Mammary epithelial cell (primary cell): ENCODE measurements at regions of chr6 and their contacts with region 1.

Region 1: GRCh38 chr6:116648156-116648555 is 20.4 kb downstream of the ZUP1 start:
- DNase-seq: no peak
- H3K4me3 ChIP-seq: no peak overlapping the region
- H3K27ac ChIP-seq: no peak overlapping the region
- H3K4me1 ChIP-seq: no peaks in the 10 kb centered on the region
- H3K27me3 ChIP-seq: no peaks in the 10 kb centered on the region
- CTCF ChIP-seq: no peak

Region 2: GRCh38 chr6:116531675-116532570 is 116.2 kb before region 1 on chr6:
- CTCF ChIA-PET with region 1: no interaction called
- dilution Hi-C with region 1: no loop called
- in situ Hi-C with region 1: no loop called
- intact Hi-C with region 1: no loop called
- DNase-seq: peak; percentile 42
- H3K4me3 ChIP-seq: no peak overlapping the region
- H3K27ac ChIP-seq: no peak overlapping the region
- H3K4me1 ChIP-seq: peaks cover 27% of the 10 kb centered on the region
- H3K27me3 ChIP-seq: no peaks in the 10 kb centered on the region
- CTCF ChIP-seq: peak; percentile 68 to 72

Region 3: DNA sequence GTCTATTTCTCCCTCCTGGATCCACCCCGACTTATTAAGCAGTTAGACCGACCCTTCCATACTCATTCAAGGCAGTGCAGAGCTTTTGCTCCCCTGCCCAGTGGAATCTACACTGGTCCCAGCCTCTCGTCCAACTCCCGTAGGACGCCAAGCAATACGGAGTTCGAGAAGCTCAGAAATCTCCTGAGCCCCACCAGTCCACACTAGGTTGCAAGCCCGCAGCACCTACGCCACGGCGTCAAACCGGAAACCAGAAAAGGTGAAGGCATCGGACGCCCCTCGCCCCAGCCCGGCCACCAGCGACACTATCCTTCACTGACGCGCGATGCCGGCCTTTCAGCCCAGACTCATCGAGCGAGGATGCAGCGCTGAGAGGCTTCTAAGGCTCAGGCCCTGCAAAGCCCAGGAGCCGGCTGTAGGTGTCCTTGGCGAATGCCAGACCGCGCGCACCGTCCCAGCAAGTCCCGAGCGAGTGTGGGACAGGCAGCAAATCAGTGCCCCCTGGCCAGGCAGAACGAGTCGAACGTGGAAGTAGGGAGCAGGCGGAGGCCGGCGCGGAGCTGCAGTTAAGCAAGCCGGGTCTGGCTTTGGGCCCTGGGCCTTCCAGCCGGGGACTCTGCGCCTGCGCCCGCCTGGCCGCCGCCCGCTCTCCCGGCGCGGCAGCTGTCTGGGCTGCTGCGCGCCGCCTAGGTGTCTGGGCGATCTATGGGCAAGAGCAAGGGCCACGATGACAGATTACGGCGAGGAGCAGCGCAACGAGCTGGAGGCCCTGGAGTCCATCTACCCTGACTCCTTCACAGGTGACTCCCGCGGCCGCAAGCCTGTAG is 77.1 kb before region 1 on chr6 and contains the start of gene RWDD1:
- CTCF ChIA-PET with region 1: no interaction called
- dilution Hi-C with region 1: no loop called
- in situ Hi-C with region 1: no loop called
- intact Hi-C with region 1: loop called (anchors 2 kb)
- DNase-seq: peak; percentile 99
- H3K4me3 ChIP-seq: peak within 1 kb of the TSS; percentile 92 to 99 (median 92)
- H3K27ac ChIP-seq: peak within 1 kb of the TSS; percentile 79
- H3K4me1 ChIP-seq: peaks cover 13% of the 10 kb centered on the region
- H3K27me3 ChIP-seq: no peaks in the 10 kb centered on the region
- CTCF ChIP-seq: peak in 1 of 2 donors; percentile 22
- total RNA-seq, gene RWDD1: 27.0 to 44.7 TPM

Region 4: GRCh38 chr6:116615937-116616736 is 32.0 kb before region 1 on chr6 and contains the start of gene RSPH4A:
- CTCF ChIA-PET with region 1: no interaction called
- dilution Hi-C with region 1: no loop called
- in situ Hi-C with region 1: no loop called
- intact Hi-C with region 1: no loop called
- DNase-seq: peak; percentile 94
- H3K4me3 ChIP-seq: peak within 1 kb of the TSS; percentile 46 to 61 (median 58)
- H3K27ac ChIP-seq: peak within 1 kb of the TSS; percentile 55
- H3K4me1 ChIP-seq: peaks cover 7% of the 10 kb centered on the region
- H3K27me3 ChIP-seq: no peaks in the 10 kb centered on the region
- CTCF ChIP-seq: peak in 1 of 2 donors; percentile 11
- total RNA-seq, gene RSPH4A: 0.33 TPM in 1 of 2 donors, not detected in the other